ENCODE measurements at regions of chr4 and their contacts with region 1.

Region 1: DNA sequence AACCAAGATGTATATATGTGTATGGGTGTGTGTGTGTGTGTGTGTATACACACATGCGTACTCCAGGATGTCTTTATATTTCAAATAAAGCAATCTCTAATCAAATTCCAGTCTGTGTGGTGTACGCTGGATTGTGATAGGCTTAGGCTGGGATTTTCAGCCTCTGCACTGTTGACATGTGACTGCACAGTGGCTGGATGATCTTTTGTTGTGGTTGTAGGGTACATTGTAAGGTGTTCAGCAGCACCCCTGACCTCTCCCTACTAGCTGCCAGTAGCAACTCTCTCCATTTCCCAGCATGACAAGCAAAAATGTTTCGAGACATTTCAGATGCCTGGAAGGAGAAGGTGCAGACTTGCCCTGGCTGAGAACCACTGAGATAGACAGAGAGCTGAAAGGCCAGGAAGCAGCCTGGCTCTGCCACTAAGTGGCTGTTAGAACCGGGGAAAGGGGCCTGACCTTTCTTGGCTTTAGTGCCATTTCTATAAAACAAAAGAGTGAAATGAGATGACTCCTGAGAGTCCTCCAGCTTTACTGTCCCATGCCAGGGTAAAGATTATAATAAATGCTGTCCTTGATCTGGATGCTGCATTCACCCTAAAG is 10.5 kb downstream of the PGM2 start:
- DNase-seq: no peak
- H3K4me3 ChIP-seq: no peak overlapping the region
- H3K27ac ChIP-seq: no peak overlapping the region
- H3K4me1 ChIP-seq: no peaks in the 10 kb centered on the region
- H3K27me3 ChIP-seq: peaks cover 0 to 1% (median 0%) of the 10 kb centered on the region in 4 experiments; a peak in 1 of 7 replicates
- CTCF ChIP-seq: no peak
- EP300 ChIP-seq: no peak
- POLR2A ChIP-seq: no peak
- RAD21 ChIP-seq: no peak

Region 2: GRCh38 chr4:37715889-37716402 is 121.0 kb before region 1 on chr4:
- CTCF ChIA-PET with region 1: no interaction called
- POLR2A ChIA-PET with region 1: no interaction called
- DNase-seq: no peak
- H3K4me3 ChIP-seq: no peak overlapping the region
- H3K27ac ChIP-seq: no peak overlapping the region
- H3K4me1 ChIP-seq: no peaks in the 10 kb centered on the region; a peak in 2 of 7 replicates
- H3K27me3 ChIP-seq: no peaks in the 10 kb centered on the region
- CTCF ChIP-seq: no peak
- EP300 ChIP-seq: no peak
- POLR2A ChIP-seq: no peak
- RAD21 ChIP-seq: no peak

Region 3: GRCh38 chr4:37812710-37813109 is 24.2 kb before region 1 on chr4:
- CTCF ChIA-PET with region 1: no interaction called
- POLR2A ChIA-PET with region 1: no interaction called
- DNase-seq: no peak
- H3K4me3 ChIP-seq: no peak overlapping the region
- H3K27ac ChIP-seq: no peak overlapping the region
- H3K4me1 ChIP-seq: 0 out of 7 replicates have a peak, but pooled peaks cover 0 to 3% (median 0%) of the 10 kb centered on the region in 4 experiments
- H3K27me3 ChIP-seq: no peaks in the 10 kb centered on the region
- CTCF ChIP-seq: no peak
- EP300 ChIP-seq: no peak
- POLR2A ChIP-seq: no peak
- RAD21 ChIP-seq: no peak

Region 4: GRCh38 chr4:37826295-37827029 is 10.5 kb before region 1 on chr4 and contains the start of gene PGM2:
- CTCF ChIA-PET with region 1: interaction called, 10 read pairs
- POLR2A ChIA-PET with region 1: interaction called, 3 read pairs
- DNase-seq: peak; percentile 59 to 95
- H3K4me3 ChIP-seq: peak within 1 kb of the TSS; percentile 66 to 77 (median 72)
- H3K27ac ChIP-seq: peak within 1 kb of the TSS; percentile 41; the same call in 1 of the 2 replicates
- H3K4me1 ChIP-seq: peaks cover 0 to 5% (median 4%) of the 10 kb centered on the region in 4 experiments; a peak in 4 of 7 replicates
- H3K27me3 ChIP-seq: peaks cover 0 to 15% (median 7%) of the 10 kb centered on the region in 4 experiments; a peak in 5 of 7 replicates
- CTCF ChIP-seq: no peak
- EP300 ChIP-seq: no peak
- POLR2A ChIP-seq: peak; percentile 76 to 85
- RAD21 ChIP-seq: no peak
- total RNA-seq, gene PGM2: 34.3 and 38.0 TPM in 2 replicates